ENCODE measurements at regions of chr4 and their contacts with region 1.

Region 1: GRCh38 chr4:147590249-147590920 is 26.8 kb upstream of the TMEM184C start:
- DNase-seq: peak; percentile 53 to 84
- ATAC-seq: peak; percentile 79
- H3K4me3 ChIP-seq: no peak overlapping the region
- H3K27ac ChIP-seq: no peak overlapping the region
- H3K4me1 ChIP-seq: no peaks in the 10 kb centered on the region
- H3K27me3 ChIP-seq: no peaks in the 10 kb centered on the region

Region 2: DNA sequence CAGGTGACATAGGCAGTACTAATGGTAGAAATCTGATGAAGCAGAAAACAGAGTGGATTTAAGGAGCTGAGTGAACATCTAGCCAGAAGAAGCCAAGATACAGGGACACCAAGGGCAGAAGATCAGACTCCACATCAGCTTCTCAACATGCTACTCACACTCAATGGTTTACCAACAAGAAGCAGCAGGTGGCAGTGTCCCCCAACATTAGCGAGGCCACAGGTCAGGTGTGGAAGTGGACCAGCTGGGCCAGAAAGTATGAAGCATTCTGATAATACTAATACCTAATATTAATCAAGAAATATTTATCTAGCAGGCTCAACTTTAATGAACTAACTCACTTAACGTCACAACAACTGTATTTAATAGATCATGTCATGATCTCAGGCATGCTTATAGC is 571.3 kb before region 1 on chr4:
- intact Hi-C with region 1: loop called (anchors 5 kb)
- DNase-seq: peak; percentile 74 to 83
- ATAC-seq: peak; percentile 73
- H3K4me3 ChIP-seq: no peak overlapping the region
- H3K27ac ChIP-seq: no peak overlapping the region
- H3K4me1 ChIP-seq: no peaks in the 10 kb centered on the region
- H3K27me3 ChIP-seq: no peaks in the 10 kb centered on the region

Region 3: GRCh38 chr4:147029296-147029695 is 561.1 kb before region 1 on chr4:
- intact Hi-C with region 1: loop called in 1 of 2 experiments (anchors 5 kb)
- DNase-seq: no peak
- ATAC-seq: no peak
- H3K4me3 ChIP-seq: no peak overlapping the region
- H3K27ac ChIP-seq: no peak overlapping the region
- H3K4me1 ChIP-seq: no peaks in the 10 kb centered on the region
- H3K27me3 ChIP-seq: no peaks in the 10 kb centered on the region

Region 4: DNA sequence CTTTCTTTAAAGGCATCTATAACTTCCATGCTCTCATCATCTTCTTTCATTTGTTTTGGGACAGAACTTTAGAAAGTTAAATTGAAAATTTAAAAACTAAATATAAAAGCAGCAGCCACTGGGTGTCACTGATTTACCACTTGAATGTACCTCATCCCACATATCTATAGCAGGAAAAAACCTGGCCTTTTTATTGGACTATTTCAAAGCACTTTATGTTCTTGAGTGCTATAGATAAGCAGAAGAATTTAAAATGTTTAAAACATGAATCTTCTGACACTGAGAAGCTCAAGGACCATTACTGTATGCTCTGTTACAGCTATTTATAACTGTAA is 479.4 kb before region 1 on chr4:
- intact Hi-C with region 1: loop called in 1 of 2 experiments (anchors 5 kb)
- DNase-seq: no peak
- ATAC-seq: no peak
- H3K4me3 ChIP-seq: no peak overlapping the region
- H3K27ac ChIP-seq: no peak overlapping the region
- H3K4me1 ChIP-seq: no peaks in the 10 kb centered on the region
- H3K27me3 ChIP-seq: no peaks in the 10 kb centered on the region

Region 5: DNA sequence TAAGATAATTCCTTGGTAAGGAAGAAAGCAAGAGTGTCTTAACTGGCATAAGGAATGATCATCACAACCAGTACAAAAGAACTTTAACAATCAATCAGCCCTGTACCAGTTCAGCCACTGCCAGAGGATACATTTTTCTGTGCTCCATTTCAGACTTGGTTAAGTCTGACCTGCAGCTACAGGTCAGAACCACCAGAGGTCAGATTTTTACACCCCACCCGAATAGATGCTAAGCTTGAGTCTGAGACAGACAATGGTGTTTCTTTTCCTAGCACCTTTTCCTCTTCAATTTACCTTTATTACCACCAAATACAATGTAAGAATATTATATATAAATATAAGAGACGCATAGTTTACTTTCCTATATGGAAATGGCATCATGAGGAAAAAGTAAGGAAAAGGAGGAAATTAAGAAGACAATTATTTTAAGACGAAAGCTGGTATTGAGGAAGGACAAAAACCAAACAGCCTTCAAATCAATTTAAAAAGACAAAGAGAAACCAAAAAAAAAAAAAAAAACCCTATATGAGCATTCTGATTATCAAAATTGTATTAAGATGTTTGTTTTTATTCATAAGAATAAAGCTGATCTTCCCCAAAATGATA is 429.4 kb before region 1 on chr4:
- intact Hi-C with region 1: loop called (anchors 2 kb)
- DNase-seq: no peak
- ATAC-seq: peak; percentile 76
- H3K4me3 ChIP-seq: no peak overlapping the region
- H3K27ac ChIP-seq: no peak overlapping the region
- H3K4me1 ChIP-seq: no peaks in the 10 kb centered on the region
- H3K27me3 ChIP-seq: no peaks in the 10 kb centered on the region

Region 6: DNA sequence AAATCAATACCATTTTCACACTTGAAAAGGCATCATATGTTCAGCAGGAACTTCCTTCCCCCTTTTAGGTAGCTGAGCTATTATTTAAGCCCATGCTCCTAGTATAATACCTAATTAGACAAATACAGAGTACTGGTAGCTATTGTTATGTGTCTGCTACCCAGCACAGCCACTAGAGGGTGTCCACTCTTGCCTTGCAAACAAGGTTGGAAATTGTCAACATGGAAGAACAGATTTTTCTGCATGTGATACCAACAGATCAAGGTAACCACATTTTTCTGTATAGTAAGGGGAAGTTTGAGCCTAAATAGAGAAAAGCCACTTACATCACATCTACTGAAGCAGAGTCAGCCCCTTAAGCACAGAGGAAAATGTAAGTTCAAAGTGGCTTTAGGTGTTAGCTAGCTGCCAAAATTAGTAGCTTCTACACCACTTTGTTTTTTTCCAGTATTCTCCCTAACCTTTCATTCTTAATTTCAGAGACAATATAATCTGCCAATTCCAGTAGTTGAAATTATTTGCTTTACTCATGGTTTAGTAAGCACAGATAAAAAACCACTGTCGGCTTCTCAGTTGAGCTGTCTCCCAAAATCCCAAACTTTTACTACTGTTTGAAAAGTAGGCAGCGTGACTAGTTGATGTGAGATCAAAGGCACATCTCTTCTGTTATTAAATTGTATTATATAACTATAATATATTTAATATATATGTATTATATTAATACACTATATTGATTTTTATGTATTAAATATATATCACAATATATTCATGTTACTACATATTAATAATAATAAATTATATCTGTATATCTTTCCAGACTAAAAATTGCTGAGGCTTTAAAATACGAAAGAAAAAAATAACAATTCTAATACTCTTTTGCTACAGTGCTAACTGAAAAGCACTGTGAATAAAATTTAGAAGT is 71.3 kb before region 1 on chr4:
- intact Hi-C with region 1: loop called (anchors 5 to 10 kb)
- DNase-seq: peak in 1 of 2 donors; percentile 63
- ATAC-seq: peak; percentile 74
- H3K4me3 ChIP-seq: no peak overlapping the region
- H3K27ac ChIP-seq: no peak overlapping the region
- H3K4me1 ChIP-seq: peaks cover 3 to 8% of the 10 kb centered on the region in 2 donors
- H3K27me3 ChIP-seq: no peaks in the 10 kb centered on the region